GM23248 (cell line): ENCODE measurements at regions of chr22 and their contacts with region 1.

Region 1: GRCh38 chr22:45553351-45554039 is 50.8 kb downstream of the FBLN1 start:
- DNase-seq: peak; percentile 84
- H3K4me3 ChIP-seq: no peak overlapping the region
- H3K27ac ChIP-seq: peak overlapping the region; percentile 70
- H3K4me1 ChIP-seq: peaks cover 42% of the 10 kb centered on the region
- H3K27me3 ChIP-seq: no peaks in the 10 kb centered on the region

Region 2: DNA sequence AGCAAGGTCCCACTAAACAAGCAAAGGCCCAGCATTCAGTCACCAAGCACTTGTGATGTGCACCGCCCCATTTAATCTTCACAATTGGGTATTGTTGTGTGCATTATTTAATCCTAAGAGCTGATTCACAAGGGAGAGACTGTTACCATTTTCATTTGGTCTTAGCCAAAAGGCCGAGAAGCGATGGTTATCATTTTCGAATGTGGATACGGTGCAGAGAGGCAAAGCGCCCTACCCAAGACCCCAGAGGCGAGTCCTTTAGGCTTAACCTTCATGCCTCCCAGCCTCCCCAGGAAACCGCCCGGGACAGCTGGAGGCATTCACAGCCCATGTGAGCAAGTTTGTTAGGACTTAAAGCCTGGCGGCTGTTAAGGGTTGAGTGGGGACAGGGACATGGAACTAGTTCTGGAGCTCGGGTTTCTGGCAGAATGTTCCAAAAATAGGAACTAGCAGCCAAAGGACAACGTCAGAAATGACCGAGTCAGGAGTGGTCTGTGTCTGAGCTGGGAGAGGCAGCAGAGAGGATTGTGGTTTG is 281.8 kb before region 1 on chr22:
- in situ Hi-C with region 1: loop called (anchors 10 kb)
- DNase-seq: peak; percentile 37
- H3K4me3 ChIP-seq: no peak overlapping the region
- H3K27ac ChIP-seq: no peak overlapping the region
- H3K4me1 ChIP-seq: no peaks in the 10 kb centered on the region
- H3K27me3 ChIP-seq: no peaks in the 10 kb centered on the region

Region 3: GRCh38 chr22:45448431-45448830 is 105.1 kb before region 1 on chr22:
- in situ Hi-C with region 1: loop called (anchors 5 kb)
- DNase-seq: peak; percentile 45
- H3K4me3 ChIP-seq: no peak overlapping the region
- H3K27ac ChIP-seq: no peak overlapping the region
- H3K4me1 ChIP-seq: peaks cover 49% of the 10 kb centered on the region
- H3K27me3 ChIP-seq: no peaks in the 10 kb centered on the region

Region 4: GRCh38 chr22:45934659-45935341 is 381.3 kb after region 1 on chr22:
- in situ Hi-C with region 1: no loop called
- DNase-seq: peak; percentile 96
- H3K4me3 ChIP-seq: peak overlapping the region; percentile 60
- H3K27ac ChIP-seq: peak overlapping the region; percentile 39
- H3K4me1 ChIP-seq: peaks cover 12% of the 10 kb centered on the region
- H3K27me3 ChIP-seq: no peaks in the 10 kb centered on the region; the same call in 1 of the 2 replicates